ENCODE measurements at regions of chr3 and their contacts with region 1.

Region 1: DNA sequence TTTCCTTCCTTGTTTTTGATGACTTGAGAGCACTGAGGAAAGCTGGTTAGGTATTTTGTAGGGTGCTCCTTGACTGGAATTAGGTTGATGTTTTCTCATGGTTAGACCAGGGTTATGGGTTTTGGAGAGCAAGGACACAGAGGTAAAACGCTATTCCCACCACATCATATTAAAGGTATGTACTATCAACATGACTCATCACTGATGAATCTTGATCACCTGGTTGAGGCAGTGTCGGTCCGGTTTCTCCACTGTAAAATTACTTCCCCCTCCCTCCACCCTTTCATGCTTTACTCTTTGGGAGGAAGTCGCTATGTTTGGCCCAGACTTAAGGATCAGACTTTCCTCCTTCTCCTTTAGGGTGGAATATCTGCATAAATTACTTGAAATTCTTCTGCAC is 201.6 kb downstream of the EDEM1 start:
- DNase-seq: peak; percentile 78
- H3K4me3 Mint-ChIP-seq: peak overlapping the region; percentile 24
- H3K27ac Mint-ChIP-seq: peak overlapping the region; percentile 96
- H3K4me1 Mint-ChIP-seq: peaks cover 43% of the 10 kb centered on the region
- H3K27me3 Mint-ChIP-seq: no peaks in the 10 kb centered on the region
- CTCF ChIP-seq: no peak

Region 2: GRCh38 chr3:5314897-5315296 is 74.2 kb before region 1 on chr3:
- CTCF ChIA-PET with region 1: no interaction called
- intact Hi-C with region 1: loop called (anchors 1 kb)
- DNase-seq: no peak
- H3K4me3 Mint-ChIP-seq: no peak overlapping the region
- H3K27ac Mint-ChIP-seq: peak overlapping the region; percentile 53
- H3K4me1 Mint-ChIP-seq: peaks cover 59% of the 10 kb centered on the region
- H3K27me3 Mint-ChIP-seq: no peaks in the 10 kb centered on the region
- CTCF ChIP-seq: no peak

Region 3: GRCh38 chr3:5322649-5323056 is 66.4 kb before region 1 on chr3:
- CTCF ChIA-PET with region 1: interaction called, 6 read pairs
- intact Hi-C with region 1: loop called (anchors 2 kb)
- DNase-seq: peak; percentile 67
- H3K4me3 Mint-ChIP-seq: peak overlapping the region; percentile 35
- H3K27ac Mint-ChIP-seq: peak overlapping the region; percentile 65
- H3K4me1 Mint-ChIP-seq: peaks cover 44% of the 10 kb centered on the region
- H3K27me3 Mint-ChIP-seq: no peaks in the 10 kb centered on the region
- CTCF ChIP-seq: no peak

Region 4: DNA sequence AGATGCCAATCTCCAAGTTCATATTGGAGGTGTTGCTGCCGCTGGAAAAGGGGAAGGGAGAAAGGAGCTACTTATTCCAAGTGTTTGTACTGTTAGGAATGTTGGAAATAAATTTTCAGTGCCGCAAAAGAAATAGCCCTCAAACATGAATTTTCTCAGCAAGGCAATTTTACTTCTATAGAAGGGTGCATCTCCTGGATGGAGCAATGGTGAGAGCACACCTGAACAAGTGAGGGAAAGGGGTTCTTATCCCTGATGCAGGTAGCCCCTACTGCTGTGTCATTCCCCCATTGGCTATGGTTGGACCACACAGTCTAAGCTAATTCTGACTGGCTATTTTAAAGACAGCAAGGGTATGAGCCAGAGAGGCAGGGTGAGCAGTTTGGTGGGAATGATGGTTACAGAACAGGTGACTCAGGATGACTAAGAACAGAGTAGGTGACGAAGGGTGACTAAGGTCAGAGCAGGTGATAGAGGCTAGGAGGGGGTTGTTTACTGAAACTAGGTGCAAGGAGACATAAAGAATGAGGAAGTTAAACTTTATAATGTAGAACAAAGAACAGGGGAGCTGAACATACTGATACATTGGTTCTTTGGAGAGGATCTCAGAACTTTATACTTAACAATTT is 302.0 kb after region 1 on chr3:
- CTCF ChIA-PET with region 1: no interaction called
- intact Hi-C with region 1: no loop called
- DNase-seq: no peak
- H3K4me3 Mint-ChIP-seq: peak overlapping the region; percentile 2
- H3K27ac Mint-ChIP-seq: peak overlapping the region; percentile 34
- H3K4me1 Mint-ChIP-seq: no peaks in the 10 kb centered on the region
- H3K27me3 Mint-ChIP-seq: no peaks in the 10 kb centered on the region
- CTCF ChIP-seq: no peak